Right ventricle myocardium superior (tissue), 1 donor: ENCODE measurements at regions of chr11 and their contacts with region 1.

Region 1: DNA sequence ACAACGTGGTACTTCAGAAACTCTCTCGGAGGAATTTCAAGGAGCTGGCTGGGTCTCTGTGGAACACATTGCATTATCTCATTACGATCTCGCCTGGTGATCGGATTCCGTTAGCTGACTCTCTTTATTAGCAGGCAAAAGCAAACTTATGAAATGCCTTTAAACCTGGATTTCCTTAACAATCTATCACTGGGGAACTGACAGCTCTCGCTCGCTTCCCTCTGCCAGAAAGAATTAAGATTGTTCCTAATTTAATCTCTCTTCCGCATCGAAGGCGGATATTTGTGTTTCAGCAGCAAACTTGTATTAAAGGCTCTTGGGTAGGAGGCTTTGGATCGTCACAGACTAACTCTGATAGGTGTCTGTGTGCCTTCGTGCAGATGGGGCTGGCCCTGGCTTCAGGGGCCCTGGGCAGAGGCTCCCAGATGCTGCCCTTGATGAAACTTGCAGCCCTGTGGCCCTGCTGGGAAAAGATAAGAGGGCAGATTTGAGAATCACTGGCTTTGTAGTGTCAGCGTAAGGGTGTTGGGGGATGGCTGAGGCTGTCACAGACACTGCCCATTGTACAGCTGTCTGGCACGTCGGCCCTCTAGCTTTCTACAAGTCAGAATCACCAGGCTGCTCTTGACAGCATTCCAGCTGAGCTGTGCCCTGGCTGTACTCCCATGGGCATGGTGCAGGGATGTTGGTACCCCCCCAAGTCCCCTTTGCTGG is 162.2 kb upstream of the NECTIN1 start:
- DNase-seq: peak; percentile 86
- ATAC-seq: peak; percentile 88

Region 2: DNA sequence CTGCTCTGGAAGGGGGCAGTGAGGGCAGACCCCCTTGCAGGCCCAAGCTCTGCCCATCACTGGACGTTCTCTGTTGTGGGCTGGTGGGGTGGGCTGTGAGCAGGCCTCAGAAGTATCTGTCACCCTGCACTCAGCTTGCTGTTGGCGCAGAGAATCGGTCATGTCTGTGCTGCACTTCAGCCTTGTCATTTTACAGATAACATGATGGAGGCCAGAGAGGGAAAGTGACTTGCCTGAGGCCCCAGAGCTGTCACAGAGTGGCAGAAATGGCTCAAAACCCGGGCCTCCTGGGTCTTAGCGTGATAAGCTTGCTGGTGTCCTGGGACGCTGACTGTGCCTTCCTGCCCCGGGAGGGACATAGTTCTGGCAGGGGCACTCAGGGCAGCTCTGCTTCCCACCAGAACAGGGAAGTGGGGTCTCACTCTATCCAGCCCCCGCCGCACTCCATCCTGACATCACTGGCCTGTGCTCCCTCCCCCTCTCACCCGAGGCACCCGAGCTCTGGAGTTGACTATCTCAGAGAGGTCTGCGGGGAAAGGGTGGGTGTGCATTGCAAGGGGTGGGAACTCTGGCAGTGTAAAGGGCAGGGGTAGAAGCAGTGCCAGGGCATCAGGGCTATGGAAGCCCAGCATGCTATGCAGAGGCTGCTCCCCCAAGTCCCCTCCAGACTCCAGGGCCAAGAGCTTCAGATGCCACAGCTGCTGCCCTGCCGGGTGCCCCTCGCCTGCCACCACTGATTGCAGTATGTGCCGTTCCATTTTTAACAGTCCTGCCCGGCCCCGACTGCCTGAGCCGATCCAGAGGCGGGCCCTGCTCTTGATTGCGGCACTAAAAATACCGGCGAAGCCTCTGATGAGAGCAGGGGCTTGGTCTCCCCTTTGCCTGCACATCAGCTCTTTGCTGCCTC is 111.8 kb before region 1 on chr11:
- intact Hi-C with region 1: loop called (anchors 2 kb)
- DNase-seq: peak; percentile 79
- ATAC-seq: peak; percentile 86